CD4-positive, alpha-beta T cell (primary cell): ENCODE measurements at regions of chr1 and their contacts with region 1.

Region 1: GRCh38 chr1:12619792-12620487 is 1.9 kb upstream of the DHRS3 start:
- DNase-seq: peak; percentile 56 to 88 (median 74)
- ATAC-seq: peak; percentile 43
- H3K4me3 ChIP-seq: peak overlapping the region; percentile 79
- H3K4me3 Mint-ChIP-seq: peak overlapping the region; percentile 99
- H3K27ac ChIP-seq: no peak overlapping the region
- H3K27ac Mint-ChIP-seq: peak overlapping the region; percentile 88
- H3K4me1 ChIP-seq: peaks cover 54% of the 10 kb centered on the region
- H3K4me1 Mint-ChIP-seq: peaks cover 43% of the 10 kb centered on the region
- H3K27me3 ChIP-seq: no peaks in the 10 kb centered on the region
- H3K27me3 Mint-ChIP-seq: no peaks in the 10 kb centered on the region
- CTCF ChIP-seq: peak; percentile 98

Region 2: DNA sequence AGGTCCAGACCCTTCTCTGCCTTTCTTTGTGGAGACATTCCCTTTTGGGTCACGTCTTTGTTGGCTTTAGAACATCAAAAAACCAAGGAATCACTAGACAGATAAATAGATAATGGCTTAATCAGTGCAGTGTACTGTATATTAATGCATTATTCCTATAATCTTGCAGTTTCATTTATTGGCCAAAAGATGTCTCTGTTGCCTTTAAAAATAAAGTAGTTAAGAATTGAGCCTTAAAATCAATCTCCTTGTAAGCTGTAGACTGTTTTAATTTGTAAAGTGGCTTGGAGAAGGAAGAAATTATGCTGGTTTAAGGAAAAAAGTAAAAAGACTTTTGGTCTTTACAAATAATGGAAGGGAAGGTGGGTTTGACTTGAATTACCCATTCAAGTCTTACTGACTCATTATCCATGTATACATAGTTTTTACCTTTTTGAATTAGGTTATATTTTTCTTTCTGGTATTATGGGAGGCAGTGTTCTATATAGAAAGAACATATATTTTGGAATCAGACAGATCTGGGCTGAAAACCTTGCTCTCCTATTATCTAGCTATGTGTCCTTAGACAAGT is 305.5 kb before region 1 on chr1:
- CTCF ChIA-PET with region 1: interaction called, 8 read pairs
- POLR2A ChIA-PET with region 1: interaction called, 4 read pairs
- intact Hi-C with region 1: loop called (anchors 1 to 2 kb)
- DNase-seq: peak in 3 of 14 experiments; percentile 29 to 38 (median 32)
- ATAC-seq: peak; percentile 59
- H3K4me3 ChIP-seq: no peak overlapping the region
- H3K4me3 Mint-ChIP-seq: no peak overlapping the region
- H3K27ac ChIP-seq: no peak overlapping the region
- H3K27ac Mint-ChIP-seq: no peak overlapping the region
- H3K4me1 ChIP-seq: no peaks in the 10 kb centered on the region
- H3K4me1 Mint-ChIP-seq: no peaks in the 10 kb centered on the region
- H3K27me3 ChIP-seq: no peaks in the 10 kb centered on the region
- H3K27me3 Mint-ChIP-seq: no peaks in the 10 kb centered on the region
- CTCF ChIP-seq: peak; percentile 68

Region 3: GRCh38 chr1:12407050-12407961 is 212.6 kb before region 1 on chr1:
- CTCF ChIA-PET with region 1: interaction called, 5 read pairs
- POLR2A ChIA-PET with region 1: interaction called, 3 read pairs
- intact Hi-C with region 1: loop called (anchors 1 kb)
- DNase-seq: peak in 4 of 14 experiments; percentile 40 to 58 (median 57)
- ATAC-seq: peak; percentile 44
- H3K4me3 ChIP-seq: no peak overlapping the region
- H3K4me3 Mint-ChIP-seq: no peak overlapping the region
- H3K27ac ChIP-seq: no peak overlapping the region
- H3K27ac Mint-ChIP-seq: no peak overlapping the region
- H3K4me1 ChIP-seq: peaks cover 3% of the 10 kb centered on the region
- H3K4me1 Mint-ChIP-seq: peaks cover 40% of the 10 kb centered on the region
- H3K27me3 ChIP-seq: no peaks in the 10 kb centered on the region
- H3K27me3 Mint-ChIP-seq: no peaks in the 10 kb centered on the region
- CTCF ChIP-seq: peak; percentile 54

Region 4: DNA sequence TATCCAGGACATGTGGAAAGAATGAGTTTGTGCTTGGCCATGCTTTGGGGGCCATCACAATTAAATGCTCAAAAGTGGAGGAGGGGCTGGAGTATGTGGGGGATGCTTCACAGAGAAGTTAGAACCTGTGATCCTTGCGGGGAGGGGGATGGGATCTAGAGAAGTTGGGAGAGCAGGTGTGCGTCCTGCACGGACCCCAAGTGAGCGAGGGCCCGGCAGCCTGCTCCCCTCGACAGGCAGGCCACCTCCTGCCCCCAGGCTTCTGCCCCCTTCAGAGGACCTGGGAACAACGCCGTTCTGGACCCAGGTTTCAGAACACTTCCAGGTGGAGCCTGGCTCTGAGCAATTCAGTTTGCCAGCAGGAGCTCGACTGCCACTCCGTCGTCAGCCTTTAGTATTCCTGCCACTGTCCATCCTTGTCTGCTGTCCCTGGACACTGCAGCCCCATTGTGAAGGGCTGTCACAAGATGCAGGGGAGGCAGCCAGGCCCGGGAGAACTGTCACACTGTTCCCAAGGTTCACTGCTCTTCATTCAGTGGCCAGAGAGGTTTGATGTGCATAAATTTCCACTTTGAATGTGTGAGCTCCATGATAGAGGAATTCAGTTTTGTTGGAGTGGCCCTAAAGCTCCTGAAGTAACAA is 114.2 kb before region 1 on chr1:
- CTCF ChIA-PET with region 1: interaction called, 26 read pairs
- POLR2A ChIA-PET with region 1: interaction called, 54 read pairs
- intact Hi-C with region 1: loop called (anchors 5 kb)
- DNase-seq: no peak
- ATAC-seq: no peak
- H3K4me3 ChIP-seq: no peak overlapping the region
- H3K4me3 Mint-ChIP-seq: no peak overlapping the region
- H3K27ac ChIP-seq: no peak overlapping the region
- H3K27ac Mint-ChIP-seq: peak overlapping the region; percentile 68
- H3K4me1 ChIP-seq: peaks cover 20% of the 10 kb centered on the region
- H3K4me1 Mint-ChIP-seq: peaks cover 32% of the 10 kb centered on the region
- H3K27me3 ChIP-seq: no peaks in the 10 kb centered on the region
- H3K27me3 Mint-ChIP-seq: no peaks in the 10 kb centered on the region
- CTCF ChIP-seq: no peak

Region 5: DNA sequence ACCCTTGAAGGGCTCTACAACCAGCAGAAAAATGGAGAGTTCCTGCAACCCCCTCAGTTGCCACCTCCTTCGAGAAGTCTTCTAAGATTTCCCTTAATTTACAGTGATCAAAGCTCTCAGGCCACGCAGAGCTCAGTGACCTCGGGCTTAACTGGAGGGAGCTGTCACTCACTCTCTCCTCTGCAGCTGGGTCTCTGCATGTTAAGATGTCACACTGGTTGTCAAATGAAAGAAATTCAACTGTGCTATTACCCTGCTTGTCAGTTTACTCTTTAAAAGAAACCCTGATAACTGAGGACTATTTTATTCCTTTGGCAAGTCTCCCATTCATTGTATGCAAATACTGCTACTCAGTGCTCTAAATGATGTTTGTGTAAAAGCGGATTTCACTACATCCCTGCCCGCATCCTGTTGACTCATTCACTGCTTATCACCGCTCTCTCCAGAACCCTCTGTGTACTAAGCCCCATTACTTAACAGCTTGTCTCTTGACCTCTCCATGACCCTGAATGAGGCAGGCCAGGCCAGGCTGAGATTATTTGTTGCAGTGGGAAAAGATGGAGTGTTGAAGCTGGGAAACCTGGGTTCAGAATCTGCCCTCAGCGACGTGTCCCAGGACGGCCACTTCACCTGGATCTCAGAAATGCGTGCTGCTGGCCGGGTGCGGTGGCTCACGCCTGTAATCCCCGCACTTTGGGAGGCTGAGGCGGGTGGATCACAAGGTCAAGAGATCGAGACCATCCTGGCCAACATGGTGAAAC is 15.6 kb before region 1 on chr1:
- CTCF ChIA-PET with region 1: interaction called, 78 read pairs
- POLR2A ChIA-PET with region 1: interaction called, 161 read pairs
- intact Hi-C with region 1: loop called (anchors 1 kb)
- DNase-seq: peak; percentile 25 to 90 (median 56)
- ATAC-seq: peak; percentile 94
- H3K4me3 ChIP-seq: no peak overlapping the region
- H3K4me3 Mint-ChIP-seq: peak overlapping the region; percentile 22
- H3K27ac ChIP-seq: peak overlapping the region; percentile 30 to 46
- H3K27ac Mint-ChIP-seq: peak overlapping the region; percentile 77
- H3K4me1 ChIP-seq: peaks cover 65% of the 10 kb centered on the region
- H3K4me1 Mint-ChIP-seq: peaks cover 73% of the 10 kb centered on the region
- H3K27me3 ChIP-seq: no peaks in the 10 kb centered on the region
- H3K27me3 Mint-ChIP-seq: no peaks in the 10 kb centered on the region
- CTCF ChIP-seq: no peak